A673 (cell line): ENCODE measurements at regions of chr5 and their contacts with region 1.

Region 1: DNA sequence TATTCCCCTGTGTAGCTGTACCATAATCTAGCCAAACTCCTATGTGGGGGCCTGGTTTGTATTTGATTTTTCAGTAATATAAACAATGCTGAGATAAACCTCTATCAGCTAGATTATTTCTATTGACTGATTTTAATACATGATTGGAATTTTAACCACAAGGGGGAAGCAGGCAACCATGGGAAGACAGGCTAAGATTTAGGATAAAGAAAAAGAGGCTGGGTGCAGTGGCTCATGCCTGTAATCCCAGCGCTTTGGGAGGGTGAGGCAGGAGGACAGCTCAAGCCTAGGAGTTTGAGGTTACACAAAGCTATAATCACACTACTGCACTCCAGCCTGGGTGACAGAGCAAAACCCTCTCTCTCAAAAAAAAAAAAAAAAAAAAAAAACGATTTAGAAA is 18.1 kb upstream of the GPX3 start:
- DNase-seq: peak; percentile 38
- H3K4me3 ChIP-seq: no peak overlapping the region
- H3K27ac ChIP-seq: no peak overlapping the region
- H3K4me1 ChIP-seq: no peaks in the 10 kb centered on the region
- H3K27me3 ChIP-seq: no peaks in the 10 kb centered on the region
- CTCF ChIP-seq: peak; percentile 44; the same call in 1 of the 2 replicates

Region 2: GRCh38 chr5:150918613-150919012 is 83.6 kb before region 1 on chr5:
- CTCF ChIA-PET with region 1: no interaction called
- POLR2A ChIA-PET with region 1: no interaction called
- intact Hi-C with region 1: no loop called
- DNase-seq: peak; percentile 23
- H3K4me3 ChIP-seq: no peak overlapping the region
- H3K27ac ChIP-seq: no peak overlapping the region
- H3K4me1 ChIP-seq: no peaks in the 10 kb centered on the region
- H3K27me3 ChIP-seq: no peaks in the 10 kb centered on the region
- CTCF ChIP-seq: no peak

Region 3: DNA sequence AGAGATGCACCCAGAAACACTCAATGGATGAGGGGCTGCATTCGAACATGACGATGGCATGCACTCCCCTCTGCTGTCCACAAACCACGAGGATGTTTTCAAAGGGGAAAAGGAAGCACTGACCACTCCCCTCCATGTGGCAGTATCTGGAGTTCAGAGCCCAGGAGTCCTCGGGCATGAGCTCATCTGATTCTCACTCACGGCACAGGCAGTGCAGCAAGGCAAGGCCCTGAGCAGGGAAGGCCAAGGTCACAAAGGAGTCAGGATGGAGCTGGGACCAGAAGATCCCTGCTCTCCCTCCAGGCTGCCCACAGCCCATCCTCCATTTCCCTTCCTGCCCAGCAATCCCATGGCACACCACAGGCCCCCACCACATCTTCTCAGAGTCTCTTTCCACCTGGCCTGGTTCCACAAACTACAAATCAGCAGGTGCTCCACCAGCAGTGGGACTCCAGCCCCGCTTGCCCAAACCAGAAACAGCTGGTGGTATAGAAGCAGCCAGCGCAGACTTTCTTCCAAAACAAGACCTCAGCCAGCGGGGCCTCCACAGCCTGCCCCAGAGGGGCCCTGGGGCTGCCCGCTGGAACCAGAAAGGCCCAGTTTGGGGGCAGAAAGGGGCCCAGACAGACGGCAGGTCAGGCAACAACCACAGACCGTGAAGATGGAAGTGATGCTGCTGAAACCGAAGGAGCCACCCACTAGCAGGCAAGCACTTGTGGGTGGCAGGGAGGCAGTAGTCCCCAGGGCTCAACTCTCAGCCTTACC is 66.4 kb after region 1 on chr5:
- CTCF ChIA-PET with region 1: no interaction called
- POLR2A ChIA-PET with region 1: no interaction called
- intact Hi-C with region 1: no loop called
- DNase-seq: no peak
- H3K4me3 ChIP-seq: no peak overlapping the region
- H3K27ac ChIP-seq: no peak overlapping the region
- H3K4me1 ChIP-seq: no peaks in the 10 kb centered on the region
- H3K27me3 ChIP-seq: no peaks in the 10 kb centered on the region
- CTCF ChIP-seq: no peak

Region 4: GRCh38 chr5:151107738-151108508 is 105.7 kb after region 1 on chr5:
- CTCF ChIA-PET with region 1: interaction called, 11 read pairs
- POLR2A ChIA-PET with region 1: no interaction called
- intact Hi-C with region 1: no loop called
- DNase-seq: no peak
- H3K4me3 ChIP-seq: no peak overlapping the region
- H3K27ac ChIP-seq: no peak overlapping the region
- H3K4me1 ChIP-seq: no peaks in the 10 kb centered on the region
- H3K27me3 ChIP-seq: no peaks in the 10 kb centered on the region
- CTCF ChIP-seq: no peak

Region 5: GRCh38 chr5:151115274-151115905 is 113.1 kb after region 1 on chr5:
- CTCF ChIA-PET with region 1: interaction called, 4 read pairs
- POLR2A ChIA-PET with region 1: no interaction called
- intact Hi-C with region 1: loop called (anchors 1 kb)
- DNase-seq: peak; percentile 66
- H3K4me3 ChIP-seq: no peak overlapping the region
- H3K27ac ChIP-seq: no peak overlapping the region
- H3K4me1 ChIP-seq: no peaks in the 10 kb centered on the region
- H3K27me3 ChIP-seq: no peaks in the 10 kb centered on the region
- CTCF ChIP-seq: peak; percentile 94

Region 6: GRCh38 chr5:151239237-151239861 is 237.1 kb after region 1 on chr5:
- CTCF ChIA-PET with region 1: no interaction called
- POLR2A ChIA-PET with region 1: no interaction called
- intact Hi-C with region 1: loop called (anchors 10 kb)
- DNase-seq: peak; percentile 64
- H3K4me3 ChIP-seq: no peak overlapping the region
- H3K27ac ChIP-seq: no peak overlapping the region
- H3K4me1 ChIP-seq: no peaks in the 10 kb centered on the region
- H3K27me3 ChIP-seq: no peaks in the 10 kb centered on the region
- CTCF ChIP-seq: peak; percentile 94